Heart left ventricle (tissue), 16 donors: ENCODE measurements at regions of chr18 and their contacts with region 1.

Region 1: DNA sequence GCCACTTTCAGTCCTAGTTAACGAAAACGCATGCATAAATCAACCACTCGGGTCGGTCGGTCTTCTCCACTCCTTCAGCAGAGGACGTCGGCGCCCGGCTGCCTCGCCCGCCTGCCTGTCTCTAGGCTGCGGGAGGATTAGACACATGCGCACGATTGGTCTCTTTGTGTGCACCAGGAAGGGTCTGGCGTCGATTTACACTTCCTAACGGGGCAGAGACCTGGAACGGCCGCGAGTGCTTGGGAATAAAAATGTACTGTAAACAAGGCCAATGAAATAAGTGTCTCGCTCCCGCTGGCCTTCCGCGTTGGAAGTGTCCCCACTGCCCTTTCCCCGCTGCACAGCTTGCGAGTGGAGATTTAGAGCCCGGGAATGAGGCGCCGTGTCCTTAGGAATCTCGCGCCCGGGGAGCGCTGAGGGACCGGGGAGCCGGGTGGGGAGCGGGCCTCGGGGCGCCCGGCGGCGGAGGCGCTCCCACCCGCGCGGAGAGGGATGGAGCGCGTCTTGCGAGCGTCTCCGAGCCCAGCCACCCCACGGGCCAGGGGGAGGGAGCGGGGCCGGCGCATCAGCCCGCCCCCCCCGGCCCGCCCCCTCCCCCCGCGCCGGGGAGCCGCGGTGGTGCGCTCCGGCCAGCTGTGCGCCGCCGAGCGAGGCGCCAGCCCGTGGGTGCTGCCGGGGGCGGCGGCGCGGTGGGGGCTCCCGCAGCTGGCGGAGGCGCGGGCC is at the start of gene DOK6:
- DNase-seq: peak; percentile 60 to 85 (median 74)
- ATAC-seq: peak; percentile 88 to 91 (median 89)
- H3K4me3 ChIP-seq: peak within 1 kb of the TSS; percentile 54 to 84 (median 62)
- H3K27ac ChIP-seq: peak within 1 kb of the TSS; percentile 30 to 88 (median 80)
- H3K4me1 ChIP-seq: peaks cover 0 to 22% (median 1%) of the 10 kb centered on the region in 12 donors
- H3K27me3 ChIP-seq: peaks cover 0 to 31% (median 0%) of the 10 kb centered on the region in 9 donors
- CTCF ChIP-seq: no peak
- POLR2A ChIP-seq: no peak
- total RNA-seq, gene DOK6: 2.0 to 9.7 (median 4.4) TPM

Region 2: GRCh38 chr18:68840554-68841263 is 559.7 kb before region 1 on chr18:
- intact Hi-C with region 1: loop called in 2 of 10 experiments (anchors 5 kb)
- DNase-seq: peak in 3 of 5 donors; percentile 21 to 41 (median 30)
- ATAC-seq: peak in 2 of 4 donors; percentile 24 to 82
- H3K4me3 ChIP-seq: no peak overlapping the region
- H3K27ac ChIP-seq: peak overlapping the region in 4 of 12 donors; percentile 4 to 53 (median 28)
- H3K4me1 ChIP-seq: peaks cover 0 to 38% (median 0%) of the 10 kb centered on the region in 12 donors
- H3K27me3 ChIP-seq: no peaks in the 10 kb centered on the region
- CTCF ChIP-seq: no peak
- POLR2A ChIP-seq: no peak

Region 3: GRCh38 chr18:68847219-68847837 is 553.1 kb before region 1 on chr18:
- intact Hi-C with region 1: loop called in 2 of 10 experiments (anchors 5 kb)
- DNase-seq: no peak
- ATAC-seq: no peak
- H3K4me3 ChIP-seq: no peak overlapping the region
- H3K27ac ChIP-seq: no peak overlapping the region
- H3K4me1 ChIP-seq: no peaks in the 10 kb centered on the region
- H3K27me3 ChIP-seq: no peaks in the 10 kb centered on the region
- CTCF ChIP-seq: peak; percentile 49 to 82 (median 65)
- POLR2A ChIP-seq: no peak

Region 4: GRCh38 chr18:69102959-69103358 is 297.5 kb before region 1 on chr18:
- intact Hi-C with region 1: no loop called
- DNase-seq: no peak
- ATAC-seq: no peak
- H3K4me3 ChIP-seq: no peak overlapping the region
- H3K27ac ChIP-seq: no peak overlapping the region
- H3K4me1 ChIP-seq: no peaks in the 10 kb centered on the region
- H3K27me3 ChIP-seq: no peaks in the 10 kb centered on the region
- CTCF ChIP-seq: no peak
- POLR2A ChIP-seq: no peak

Region 5: GRCh38 chr18:69411199-69411598 is 10.8 kb after region 1 on chr18:
- intact Hi-C with region 1: no loop called
- DNase-seq: no peak
- ATAC-seq: no peak
- H3K4me3 ChIP-seq: no peak overlapping the region
- H3K27ac ChIP-seq: no peak overlapping the region
- H3K4me1 ChIP-seq: no peaks in the 10 kb centered on the region
- H3K27me3 ChIP-seq: no peaks in the 10 kb centered on the region
- CTCF ChIP-seq: no peak
- POLR2A ChIP-seq: no peak

Region 6: GRCh38 chr18:70072678-70073077 is 672.3 kb after region 1 on chr18:
- intact Hi-C with region 1: loop called in 1 of 10 experiments (anchors 10 kb)
- DNase-seq: no peak
- ATAC-seq: peak in 2 of 4 donors; percentile 62 to 73
- H3K4me3 ChIP-seq: no peak overlapping the region
- H3K27ac ChIP-seq: no peak overlapping the region
- H3K4me1 ChIP-seq: no peaks in the 10 kb centered on the region
- H3K27me3 ChIP-seq: no peaks in the 10 kb centered on the region
- CTCF ChIP-seq: peak; percentile 21 to 59 (median 42)
- POLR2A ChIP-seq: no peak